ENCODE measurements at regions of chr1 and their contacts with region 1.

Region 1: DNA sequence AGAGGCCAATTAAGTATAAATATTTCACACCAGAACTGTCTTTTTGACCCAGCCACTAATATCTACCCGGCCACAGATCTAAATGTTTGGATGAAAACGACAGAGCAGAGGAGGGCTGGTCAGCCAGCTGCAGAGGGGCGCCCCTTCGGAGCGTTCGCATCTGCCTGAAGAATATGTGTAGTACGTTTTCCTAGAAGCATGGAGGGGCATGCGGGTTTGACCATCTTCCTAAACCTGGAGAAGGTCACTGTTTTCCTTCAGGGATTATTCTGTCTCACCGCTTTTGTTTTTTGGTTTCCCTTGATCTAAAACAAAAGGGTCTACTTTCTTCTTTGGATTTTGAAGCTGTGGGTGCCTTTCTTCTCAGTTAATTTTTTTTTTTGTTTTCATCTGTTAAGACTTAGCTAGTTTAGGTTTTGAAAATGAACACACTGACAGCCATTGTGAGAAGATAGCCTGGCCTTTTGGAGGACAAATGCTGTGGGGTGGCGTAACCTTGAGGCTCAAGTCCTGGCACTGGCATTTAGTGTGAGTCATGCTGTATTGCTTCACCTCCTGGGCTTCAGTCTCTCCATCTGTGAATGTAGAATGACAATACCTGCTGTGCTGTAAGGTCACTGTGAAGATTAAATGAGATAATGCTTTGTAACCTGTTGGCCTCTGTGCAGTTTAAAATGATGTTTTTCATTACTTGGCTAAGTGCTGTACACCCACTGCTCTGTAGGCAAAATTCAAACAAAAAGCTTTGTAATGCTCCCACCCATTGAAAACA is 74.1 kb upstream of the IRF2BP2 start:
- DNase-seq: peak in 4 of 5 donors; percentile 60 to 79 (median 70)
- ATAC-seq: peak; percentile 92 to 99 (median 98)
- H3K4me3 ChIP-seq: no peak overlapping the region
- H3K27ac ChIP-seq: peak overlapping the region in 11 of 12 donors; percentile 24 to 77 (median 65)
- H3K4me1 ChIP-seq: peaks cover 0 to 20% (median 11%) of the 10 kb centered on the region in 12 donors
- H3K27me3 ChIP-seq: no peaks in the 10 kb centered on the region
- CTCF ChIP-seq: no peak
- POLR2A ChIP-seq: no peak

Region 2: DNA sequence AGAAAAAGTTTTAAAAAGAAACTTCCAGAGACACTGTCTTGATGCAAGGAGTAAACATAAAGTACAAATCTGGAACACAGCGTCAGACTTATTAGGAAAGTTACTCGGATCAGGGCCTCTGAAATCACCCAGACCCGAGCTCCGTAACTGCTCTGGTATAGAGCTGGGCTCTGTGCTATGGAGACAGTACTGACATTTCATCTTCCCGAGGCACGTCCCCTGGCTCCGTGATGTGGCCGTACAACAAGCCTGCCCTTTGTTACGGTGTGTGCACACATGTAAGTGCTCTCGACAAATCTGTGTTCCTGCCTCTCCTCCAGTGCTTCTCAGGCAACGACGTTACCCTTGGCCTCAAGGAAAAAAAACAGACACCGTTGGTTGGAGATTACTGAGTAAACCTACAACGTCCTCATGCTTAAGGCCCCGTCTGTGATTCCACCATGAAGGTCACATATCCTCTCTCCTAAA is 32.9 kb after region 1 on chr1:
- intact Hi-C with region 1: loop called in 1 of 10 experiments (anchors 5 kb)
- DNase-seq: no peak
- ATAC-seq: no peak
- H3K4me3 ChIP-seq: no peak overlapping the region
- H3K27ac ChIP-seq: peak overlapping the region in 10 of 12 donors; percentile 12 to 99 (median 96)
- H3K4me1 ChIP-seq: peaks cover 4 to 67% (median 61%) of the 10 kb centered on the region in 12 donors
- H3K27me3 ChIP-seq: no peaks in the 10 kb centered on the region
- CTCF ChIP-seq: no peak
- POLR2A ChIP-seq: no peak

Region 3: DNA sequence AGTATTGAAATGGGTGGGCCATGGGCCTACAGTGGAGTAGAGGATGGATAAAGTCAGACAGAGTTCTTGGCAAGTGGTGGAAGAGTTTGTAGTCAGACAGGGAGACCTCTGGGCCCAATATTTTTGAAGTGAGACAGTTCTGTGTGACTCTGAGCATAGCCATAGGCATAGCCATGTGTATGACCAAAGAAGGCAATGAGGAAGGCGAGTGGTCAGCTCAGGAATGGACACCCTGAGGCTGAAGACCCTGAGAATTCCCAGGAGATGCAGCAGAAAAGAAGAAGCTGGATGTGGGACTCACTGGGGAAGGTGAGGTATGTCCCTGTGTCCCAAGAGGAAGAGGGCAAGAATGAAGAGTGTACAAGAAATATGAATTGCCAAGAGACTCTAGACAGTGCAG is 136.6 kb after region 1 on chr1:
- intact Hi-C with region 1: no loop called
- DNase-seq: no peak
- ATAC-seq: no peak
- H3K4me3 ChIP-seq: no peak overlapping the region
- H3K27ac ChIP-seq: no peak overlapping the region
- H3K4me1 ChIP-seq: peaks cover 0 to 4% (median 0%) of the 10 kb centered on the region in 12 donors
- H3K27me3 ChIP-seq: no peaks in the 10 kb centered on the region
- CTCF ChIP-seq: no peak
- POLR2A ChIP-seq: no peak

Measured in heart left ventricle (tissue), 16 donors.